SK-N-SH (cell line): ENCODE measurements at regions of chr16 and their contacts with region 1.

Region 1: GRCh38 chr16:74226338-74226954 is 70.2 kb upstream of the PSMD7 start:
- DNase-seq: peak; percentile 37
- H3K4me3 ChIP-seq: no peak overlapping the region
- H3K27ac ChIP-seq: no peak overlapping the region
- H3K4me1 ChIP-seq: no peaks in the 10 kb centered on the region
- H3K27me3 ChIP-seq: no peaks in the 10 kb centered on the region
- CTCF ChIP-seq: peak; percentile 59
- EP300 ChIP-seq: no peak
- RAD21 ChIP-seq: peak; percentile 83

Region 2: DNA sequence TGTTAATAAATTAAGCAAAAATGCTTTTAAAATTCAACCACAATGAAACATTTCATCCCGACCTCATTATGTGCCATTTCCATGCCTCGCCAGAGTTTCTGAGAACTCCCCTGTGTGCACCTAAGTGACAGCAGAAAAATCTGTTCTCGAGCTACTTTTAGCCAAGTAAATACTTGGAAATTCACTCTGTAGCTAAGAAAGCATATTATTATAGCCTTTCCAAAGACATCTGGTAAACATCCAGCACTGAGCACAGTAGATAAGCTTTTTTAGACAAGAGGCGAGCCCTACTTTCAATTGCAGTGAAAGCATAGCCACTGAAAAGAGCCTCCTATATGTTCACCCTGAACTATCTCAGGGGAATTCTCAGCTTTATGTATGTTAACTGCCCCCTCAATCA is 172.6 kb before region 1 on chr16:
- CTCF ChIA-PET with region 1: interaction called, 12 read pairs
- POLR2A ChIA-PET with region 1: no interaction called
- DNase-seq: no peak
- H3K4me3 ChIP-seq: no peak overlapping the region
- H3K27ac ChIP-seq: no peak overlapping the region
- H3K4me1 ChIP-seq: no peaks in the 10 kb centered on the region
- H3K27me3 ChIP-seq: no peaks in the 10 kb centered on the region
- CTCF ChIP-seq: no peak
- EP300 ChIP-seq: no peak
- RAD21 ChIP-seq: no peak

Region 3: GRCh38 chr16:74064120-74064735 is 162.2 kb before region 1 on chr16:
- CTCF ChIA-PET with region 1: interaction called, 150 read pairs
- POLR2A ChIA-PET with region 1: interaction called, 3 read pairs
- DNase-seq: peak; percentile 55
- H3K4me3 ChIP-seq: no peak overlapping the region
- H3K27ac ChIP-seq: no peak overlapping the region
- H3K4me1 ChIP-seq: no peaks in the 10 kb centered on the region; a peak in 1 of 4 replicates
- H3K27me3 ChIP-seq: no peaks in the 10 kb centered on the region
- CTCF ChIP-seq: no peak; the same call in 1 of the 2 replicates
- EP300 ChIP-seq: no peak
- RAD21 ChIP-seq: peak; percentile 80

Region 4: GRCh38 chr16:74070237-74070636 is 156.2 kb before region 1 on chr16:
- CTCF ChIA-PET with region 1: interaction called, 150 read pairs
- POLR2A ChIA-PET with region 1: no interaction called
- DNase-seq: no peak
- H3K4me3 ChIP-seq: no peak overlapping the region
- H3K27ac ChIP-seq: no peak overlapping the region
- H3K4me1 ChIP-seq: no peaks in the 10 kb centered on the region
- H3K27me3 ChIP-seq: no peaks in the 10 kb centered on the region
- CTCF ChIP-seq: no peak
- EP300 ChIP-seq: no peak
- RAD21 ChIP-seq: no peak

Region 5: DNA sequence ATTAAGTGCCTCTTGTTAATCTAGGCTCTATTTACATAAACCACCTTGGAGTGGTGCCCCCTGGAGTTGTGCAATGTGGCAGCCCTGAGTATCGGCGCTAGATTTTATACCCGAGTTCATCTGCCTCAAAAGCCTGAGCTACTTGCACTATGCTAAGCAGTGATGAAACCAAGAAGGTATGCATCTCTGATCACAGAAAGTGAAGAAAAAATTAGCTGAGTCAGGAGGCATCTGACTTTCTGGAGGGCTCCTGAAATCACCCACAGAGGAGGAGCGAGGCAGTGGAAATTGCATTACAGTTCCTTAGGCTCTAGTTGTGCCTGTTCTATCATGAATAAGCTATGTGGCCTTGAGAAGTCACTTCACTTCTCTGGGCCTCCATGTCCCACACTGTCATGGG is 10.1 kb before region 1 on chr16:
- CTCF ChIA-PET with region 1: interaction called, 37 read pairs
- POLR2A ChIA-PET with region 1: no interaction called
- DNase-seq: no peak
- H3K4me3 ChIP-seq: no peak overlapping the region
- H3K27ac ChIP-seq: no peak overlapping the region
- H3K4me1 ChIP-seq: no peaks in the 10 kb centered on the region
- H3K27me3 ChIP-seq: no peaks in the 10 kb centered on the region
- CTCF ChIP-seq: no peak
- EP300 ChIP-seq: no peak
- RAD21 ChIP-seq: no peak

Region 6: GRCh38 chr16:74249254-74249653 is 22.8 kb after region 1 on chr16:
- CTCF ChIA-PET with region 1: interaction called, 15 read pairs
- POLR2A ChIA-PET with region 1: no interaction called
- DNase-seq: no peak
- H3K4me3 ChIP-seq: no peak overlapping the region
- H3K27ac ChIP-seq: no peak overlapping the region
- H3K4me1 ChIP-seq: no peaks in the 10 kb centered on the region; a peak in 1 of 4 replicates
- H3K27me3 ChIP-seq: no peaks in the 10 kb centered on the region
- CTCF ChIP-seq: no peak
- EP300 ChIP-seq: no peak
- RAD21 ChIP-seq: no peak

Region 7: DNA sequence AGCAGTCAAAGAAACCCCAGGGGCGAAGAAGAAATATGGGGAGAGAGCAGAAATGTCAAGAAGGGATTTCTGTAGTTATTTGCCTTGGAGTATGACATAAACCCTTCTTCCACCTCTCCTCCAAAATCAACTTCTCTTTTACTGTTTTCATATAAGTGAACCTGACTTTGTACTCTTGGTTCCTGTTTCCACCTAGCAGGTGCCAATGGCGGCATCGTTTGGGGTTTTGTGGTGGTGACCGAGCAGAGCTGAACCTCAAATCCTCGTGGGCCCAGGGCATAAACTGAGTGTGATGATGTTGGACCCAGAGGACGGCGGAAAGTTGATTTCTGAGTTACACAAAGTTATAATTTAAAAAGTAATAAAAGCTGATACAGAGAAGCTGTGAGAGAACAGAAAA is 30.6 kb after region 1 on chr16:
- CTCF ChIA-PET with region 1: interaction called, 15 read pairs
- POLR2A ChIA-PET with region 1: no interaction called
- DNase-seq: no peak
- H3K4me3 ChIP-seq: no peak overlapping the region
- H3K27ac ChIP-seq: no peak overlapping the region
- H3K4me1 ChIP-seq: no peaks in the 10 kb centered on the region
- H3K27me3 ChIP-seq: no peaks in the 10 kb centered on the region
- CTCF ChIP-seq: no peak
- EP300 ChIP-seq: no peak
- RAD21 ChIP-seq: no peak

Region 8: DNA sequence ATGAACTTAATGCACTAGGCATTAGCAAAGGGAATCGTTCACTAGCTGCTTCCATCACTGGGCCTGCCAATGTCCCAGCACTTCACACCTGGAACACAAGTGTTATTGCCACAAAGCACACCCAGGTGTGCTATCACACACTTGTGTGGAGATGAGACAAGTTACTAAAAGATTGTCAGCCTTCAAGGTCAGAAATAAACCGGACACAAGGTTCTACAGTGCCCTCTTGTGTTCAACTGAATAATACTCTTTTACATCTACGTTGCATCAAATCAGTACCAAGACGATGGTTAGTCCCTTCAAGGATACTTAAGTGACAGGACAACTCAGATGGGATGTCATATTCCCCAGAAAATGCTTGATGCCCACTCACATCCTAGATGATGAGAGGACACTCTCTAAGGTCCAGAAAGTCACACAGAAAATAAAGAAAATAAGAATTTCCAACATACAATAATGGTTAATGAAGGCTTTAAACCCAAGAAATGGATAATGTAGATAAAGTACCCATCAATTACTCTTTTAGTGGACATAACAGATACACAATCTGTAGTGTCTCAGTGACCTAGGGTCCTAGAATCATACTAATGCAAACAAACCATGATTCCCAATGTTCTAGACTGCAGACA is 396.9 kb after region 1 on chr16:
- CTCF ChIA-PET with region 1: no interaction called
- POLR2A ChIA-PET with region 1: no interaction called
- DNase-seq: peak; percentile 47
- H3K4me3 ChIP-seq: no peak overlapping the region
- H3K27ac ChIP-seq: no peak overlapping the region
- H3K4me1 ChIP-seq: peaks cover 9 to 19% of the 10 kb centered on the region in 2 experiments; a peak in 3 of 4 replicates
- H3K27me3 ChIP-seq: no peaks in the 10 kb centered on the region
- CTCF ChIP-seq: peak; percentile 76
- EP300 ChIP-seq: no peak
- RAD21 ChIP-seq: peak; percentile 83